ENCODE measurements at regions of chr4 and their contacts with region 1.

Region 1: GRCh38 chr4:92387459-92388069 is 83.8 kb downstream of the GRID2 start:
- DNase-seq: peak; percentile 53
- ATAC-seq: peak; percentile 66
- H3K4me3 ChIP-seq: no peak overlapping the region
- H3K27ac ChIP-seq: no peak overlapping the region
- H3K4me1 ChIP-seq: no peaks in the 10 kb centered on the region
- H3K27me3 ChIP-seq: no peaks in the 10 kb centered on the region
- CTCF ChIP-seq: peak; percentile 56
- POLR2A ChIP-seq: no peak
- RAD21 ChIP-seq: peak; percentile 54

Region 2: DNA sequence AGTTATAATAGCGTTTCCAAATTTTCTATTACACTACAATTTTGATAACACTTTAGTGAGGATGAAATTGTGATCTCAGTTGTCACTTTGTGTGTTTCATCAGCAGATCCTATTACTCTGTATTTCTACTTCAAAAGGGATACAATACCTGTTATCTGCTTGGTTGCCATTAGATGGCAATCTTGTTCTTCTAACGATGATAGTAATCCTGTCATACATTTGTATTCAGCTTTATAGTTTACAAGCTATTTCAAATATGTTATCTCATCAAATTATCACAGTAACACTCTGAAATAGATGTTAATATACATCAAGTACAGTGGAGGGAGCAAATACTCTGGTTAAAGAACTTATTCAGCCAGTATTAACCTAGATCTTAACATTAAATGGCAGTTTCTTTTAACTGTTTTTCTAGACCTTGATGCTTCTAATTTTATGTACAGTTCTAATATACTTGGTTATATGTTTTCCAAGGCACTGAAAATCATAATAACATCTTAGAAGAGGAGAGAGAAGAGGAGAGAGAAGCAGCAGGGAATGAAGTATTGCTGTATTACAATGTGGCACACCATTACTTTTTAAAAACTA is 1968.3 kb before region 1 on chr4:
- CTCF ChIA-PET with region 1: no interaction called
- POLR2A ChIA-PET with region 1: no interaction called
- dilution Hi-C with region 1: no loop called
- in situ Hi-C with region 1: loop called (anchors 25 kb)
- intact Hi-C with region 1: loop called (anchors 5 kb)
- DNase-seq: peak; percentile 37
- ATAC-seq: peak; percentile 64
- H3K4me3 ChIP-seq: no peak overlapping the region
- H3K27ac ChIP-seq: no peak overlapping the region
- H3K4me1 ChIP-seq: no peaks in the 10 kb centered on the region
- H3K27me3 ChIP-seq: no peaks in the 10 kb centered on the region
- CTCF ChIP-seq: peak; percentile 54
- POLR2A ChIP-seq: no peak
- RAD21 ChIP-seq: peak; percentile 66

Region 3: GRCh38 chr4:91113130-91113706 is 1274.3 kb before region 1 on chr4:
- CTCF ChIA-PET with region 1: no interaction called
- POLR2A ChIA-PET with region 1: no interaction called
- dilution Hi-C with region 1: no loop called
- in situ Hi-C with region 1: no loop called
- intact Hi-C with region 1: loop called (anchors 2 kb)
- DNase-seq: peak; percentile 6
- ATAC-seq: no peak
- H3K4me3 ChIP-seq: no peak overlapping the region
- H3K27ac ChIP-seq: no peak overlapping the region
- H3K4me1 ChIP-seq: no peaks in the 10 kb centered on the region
- H3K27me3 ChIP-seq: no peaks in the 10 kb centered on the region
- CTCF ChIP-seq: peak; percentile 40
- POLR2A ChIP-seq: no peak
- RAD21 ChIP-seq: peak; percentile 46

Region 4: DNA sequence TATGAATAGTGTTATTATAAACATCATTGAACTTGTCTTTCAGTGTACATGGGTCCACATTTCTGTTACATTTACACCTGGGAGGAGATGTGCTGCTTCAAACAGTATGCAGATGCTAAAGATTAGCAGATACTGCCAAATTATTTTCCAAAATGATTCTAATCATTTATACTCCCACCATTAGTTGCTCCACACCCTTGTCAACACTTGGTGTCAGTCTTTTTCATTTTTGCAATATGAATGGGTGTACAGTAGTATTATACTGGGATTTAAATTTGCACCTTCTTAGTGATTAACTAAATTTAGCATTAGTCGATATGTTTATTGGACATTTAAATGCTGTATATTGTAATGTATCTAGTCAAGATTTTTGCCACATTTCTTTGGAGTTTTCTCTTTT is 215.4 kb before region 1 on chr4:
- CTCF ChIA-PET with region 1: no interaction called
- POLR2A ChIA-PET with region 1: no interaction called
- dilution Hi-C with region 1: no loop called
- in situ Hi-C with region 1: no loop called
- intact Hi-C with region 1: loop called (anchors 2 kb)
- DNase-seq: no peak
- ATAC-seq: peak; percentile 48; the same call in 1 of the 2 replicates
- H3K4me3 ChIP-seq: no peak overlapping the region
- H3K27ac ChIP-seq: no peak overlapping the region
- H3K4me1 ChIP-seq: no peaks in the 10 kb centered on the region
- H3K27me3 ChIP-seq: no peaks in the 10 kb centered on the region; the same call in 1 of the 2 replicates
- CTCF ChIP-seq: peak; percentile 46
- POLR2A ChIP-seq: no peak
- RAD21 ChIP-seq: peak; percentile 50

Region 5: DNA sequence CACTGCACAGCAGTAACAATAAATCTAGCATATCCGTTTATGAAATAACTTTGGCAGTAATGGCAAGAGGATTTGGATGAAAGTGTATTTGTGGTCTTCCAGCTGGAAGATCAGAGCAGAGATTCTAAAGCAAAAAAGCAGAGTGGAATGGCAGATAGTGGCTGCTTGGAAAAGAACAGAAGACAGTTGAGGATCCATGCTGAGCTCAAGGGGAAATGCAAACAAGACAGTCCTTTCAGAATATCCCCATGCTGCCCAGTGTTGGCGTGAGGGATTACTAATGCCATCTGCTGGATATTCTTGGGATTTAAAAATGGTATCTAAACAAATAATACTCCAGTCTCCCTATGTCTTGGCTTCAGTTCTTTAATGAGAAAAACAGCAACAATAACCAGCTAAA is 811.9 kb after region 1 on chr4:
- CTCF ChIA-PET with region 1: no interaction called
- POLR2A ChIA-PET with region 1: no interaction called
- dilution Hi-C with region 1: no loop called
- in situ Hi-C with region 1: no loop called
- intact Hi-C with region 1: loop called (anchors 1 kb)
- DNase-seq: peak; percentile 29
- ATAC-seq: peak; percentile 89
- H3K4me3 ChIP-seq: no peak overlapping the region
- H3K27ac ChIP-seq: no peak overlapping the region
- H3K4me1 ChIP-seq: no peaks in the 10 kb centered on the region
- H3K27me3 ChIP-seq: no peaks in the 10 kb centered on the region; the same call in 1 of the 2 replicates
- CTCF ChIP-seq: peak; percentile 55
- POLR2A ChIP-seq: no peak
- RAD21 ChIP-seq: peak; percentile 58

Region 6: GRCh38 chr4:93228021-93228420 is 840.5 kb after region 1 on chr4:
- CTCF ChIA-PET with region 1: no interaction called
- POLR2A ChIA-PET with region 1: no interaction called
- dilution Hi-C with region 1: no loop called
- in situ Hi-C with region 1: no loop called
- intact Hi-C with region 1: no loop called
- DNase-seq: no peak
- ATAC-seq: no peak
- H3K4me3 ChIP-seq: no peak overlapping the region
- H3K27ac ChIP-seq: no peak overlapping the region
- H3K4me1 ChIP-seq: no peaks in the 10 kb centered on the region
- H3K27me3 ChIP-seq: no peaks in the 10 kb centered on the region
- CTCF ChIP-seq: no peak
- POLR2A ChIP-seq: no peak
- RAD21 ChIP-seq: no peak

Region 7: GRCh38 chr4:93764639-93765246 is 1377.2 kb after region 1 on chr4:
- CTCF ChIA-PET with region 1: no interaction called
- POLR2A ChIA-PET with region 1: no interaction called
- dilution Hi-C with region 1: no loop called
- in situ Hi-C with region 1: no loop called
- intact Hi-C with region 1: loop called (anchors 2 kb)
- DNase-seq: peak; percentile 44
- ATAC-seq: peak; percentile 79
- H3K4me3 ChIP-seq: no peak overlapping the region
- H3K27ac ChIP-seq: no peak overlapping the region
- H3K4me1 ChIP-seq: no peaks in the 10 kb centered on the region
- H3K27me3 ChIP-seq: 0 out of 2 replicates have a peak, but pooled peaks cover 3% of the 10 kb centered on the region
- CTCF ChIP-seq: peak; percentile 92
- POLR2A ChIP-seq: 0 out of 2 replicates have a peak, but pooled peaks have one; percentile 24
- RAD21 ChIP-seq: peak; percentile 95